ENCODE measurements at regions of chr14 and their contacts with region 1.

Region 1: GRCh38 chr14:45134051-45134958 is at the start of gene FKBP3:
- DNase-seq: peak; percentile 94 to 98
- ATAC-seq: peak; percentile 98 to 99 (median 99)
- H3K4me3 ChIP-seq: peak within 1 kb of the TSS; percentile 56 to 85 (median 71)
- H3K27ac ChIP-seq: peak within 1 kb of the TSS; percentile 69 to 94 (median 92)
- H3K4me1 ChIP-seq: peaks cover 0 to 66% (median 43%) of the 10 kb centered on the region in 9 donors
- H3K27me3 ChIP-seq: no peaks in the 10 kb centered on the region
- CTCF ChIP-seq: peak in 4 of 9 donors; percentile 13 to 41 (median 40)
- total RNA-seq, gene FKBP3: 83.9 to 128 (median 105) TPM

Region 2: DNA sequence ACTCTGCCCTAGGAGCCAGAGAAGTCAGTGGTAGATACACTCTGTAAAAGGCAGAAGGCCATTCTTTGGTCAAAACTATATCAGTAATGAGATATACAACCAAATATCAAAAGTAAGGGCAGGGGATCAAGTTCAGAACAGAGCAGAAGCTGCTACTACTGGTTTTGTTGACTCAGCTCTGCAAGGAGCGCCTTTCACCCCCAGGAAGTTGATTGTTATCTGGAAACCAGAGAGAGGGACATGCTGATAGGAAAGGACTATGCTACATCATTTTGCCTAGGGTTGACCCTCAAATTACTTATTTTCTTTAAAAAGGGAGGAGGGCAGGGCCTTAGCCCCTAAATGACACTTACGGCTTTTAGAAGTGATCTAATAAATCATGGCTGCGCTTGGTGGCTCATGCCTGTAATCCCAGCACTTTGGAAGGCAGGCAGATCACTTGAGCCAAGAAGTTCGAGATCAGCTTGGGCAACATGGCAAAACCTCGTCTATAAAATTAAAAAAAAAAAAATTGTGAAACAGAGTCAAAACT is 366.6 kb before region 1 on chr14:
- intact Hi-C with region 1: no loop called
- DNase-seq: no peak
- ATAC-seq: no peak
- H3K4me3 ChIP-seq: no peak overlapping the region
- H3K27ac ChIP-seq: no peak overlapping the region
- H3K4me1 ChIP-seq: no peaks in the 10 kb centered on the region
- H3K27me3 ChIP-seq: no peaks in the 10 kb centered on the region
- CTCF ChIP-seq: no peak

Region 3: GRCh38 chr14:44897045-44897844 is 237.1 kb before region 1 on chr14:
- intact Hi-C with region 1: loop called in 4 of 10 experiments (anchors 1 to 10 kb)
- DNase-seq: peak; percentile 98
- ATAC-seq: peak; percentile 98 to 100 (median 99)
- H3K4me3 ChIP-seq: peak overlapping the region; percentile 67 to 96 (median 90)
- H3K27ac ChIP-seq: peak overlapping the region; percentile 96 to 100 (median 99)
- H3K4me1 ChIP-seq: peaks cover 0 to 30% (median 21%) of the 10 kb centered on the region in 9 donors
- H3K27me3 ChIP-seq: no peaks in the 10 kb centered on the region
- CTCF ChIP-seq: peak in 1 of 9 donors; percentile 21

Region 4: DNA sequence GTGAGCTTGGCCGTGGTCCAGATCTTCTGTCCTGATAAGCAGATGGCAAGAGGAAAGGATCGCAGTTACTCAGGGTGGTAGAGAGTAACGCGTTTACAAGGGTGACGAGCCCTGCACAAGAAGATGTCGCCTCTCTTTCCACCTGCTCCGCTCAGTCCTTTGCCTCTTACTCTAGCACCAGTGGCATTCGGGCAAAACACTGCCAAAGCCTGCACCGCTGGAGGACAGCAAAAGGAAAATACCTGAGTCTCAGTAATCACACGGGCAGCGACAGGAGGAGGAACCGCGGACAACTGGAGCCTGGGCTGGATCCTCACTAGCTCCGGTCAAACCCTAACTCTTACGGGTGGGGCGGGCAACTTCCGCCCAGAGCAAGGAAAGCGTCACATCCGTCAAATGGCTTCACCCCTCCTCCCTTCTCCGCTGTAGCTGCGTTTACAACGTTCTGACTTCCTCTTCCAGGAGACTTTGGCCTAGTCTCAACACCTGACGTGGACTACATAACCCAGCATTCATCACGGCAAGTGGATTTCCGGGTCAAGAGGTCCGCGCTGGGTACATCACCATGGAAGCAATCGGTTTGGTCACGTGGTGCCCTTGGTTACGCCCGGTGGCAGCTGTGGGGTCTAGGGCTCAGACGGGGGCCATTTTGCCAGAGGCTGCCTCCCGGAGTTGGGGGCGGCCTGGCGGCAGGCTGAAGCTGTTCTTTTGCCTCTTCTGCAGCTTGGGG is 172.5 kb before region 1 on chr14 and contains the starts of genes KLHL28 and TOGARAM1:
- intact Hi-C with region 1: loop called in 7 of 10 experiments (anchors 1 to 5 kb)
- DNase-seq: peak; percentile 89 to 99
- ATAC-seq: peak; percentile 96 to 98 (median 96)
- H3K4me3 ChIP-seq: peak within 1 kb of the TSS; percentile 50 to 98 (median 84)
- H3K27ac ChIP-seq: peak within 1 kb of the TSS; percentile 79 to 96 (median 88)
- H3K4me1 ChIP-seq: peaks cover 0 to 78% (median 66%) of the 10 kb centered on the region in 9 donors
- H3K27me3 ChIP-seq: no peaks in the 10 kb centered on the region
- CTCF ChIP-seq: no peak
- total RNA-seq, gene KLHL28: 9.0 to 15.4 (median 13.0) TPM
- total RNA-seq, gene TOGARAM1: 14.7 to 25.2 (median 22.2) TPM

Region 5: DNA sequence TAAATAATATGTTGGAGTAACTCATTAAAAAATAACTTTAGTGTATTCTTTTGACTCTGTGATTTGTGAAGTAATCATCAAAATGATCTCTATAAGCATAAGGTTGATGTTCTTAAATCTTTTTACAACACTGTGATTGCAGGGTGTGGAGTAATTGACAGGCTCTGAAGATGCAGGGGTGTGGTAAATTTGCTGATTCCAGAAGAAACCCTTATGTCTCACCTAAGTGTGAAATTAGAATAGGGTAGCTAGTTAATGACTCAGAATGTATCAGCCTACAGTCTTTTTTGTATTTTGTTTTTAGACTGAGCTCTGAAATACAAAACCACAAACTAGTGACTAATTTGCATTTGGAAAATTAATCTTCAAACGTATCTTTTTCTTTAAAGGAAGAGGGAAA is 44.5 kb before region 1 on chr14:
- intact Hi-C with region 1: loop called in 5 of 10 experiments (anchors 2 to 10 kb)
- DNase-seq: no peak
- ATAC-seq: no peak
- H3K4me3 ChIP-seq: no peak overlapping the region
- H3K27ac ChIP-seq: no peak overlapping the region
- H3K4me1 ChIP-seq: peaks cover 0 to 71% (median 56%) of the 10 kb centered on the region in 9 donors
- H3K27me3 ChIP-seq: no peaks in the 10 kb centered on the region
- CTCF ChIP-seq: no peak

Region 6: GRCh38 chr14:45253068-45253753 is 118.9 kb after region 1 on chr14 and contains the start of gene MIS18BP1:
- intact Hi-C with region 1: loop called in 8 of 10 experiments (anchors 1 to 10 kb)
- DNase-seq: peak; percentile 94 to 97
- ATAC-seq: peak; percentile 95 to 99 (median 97)
- H3K4me3 ChIP-seq: peak within 1 kb of the TSS; percentile 54 to 90 (median 76)
- H3K27ac ChIP-seq: peak within 1 kb of the TSS; percentile 89 to 97 (median 92)
- H3K4me1 ChIP-seq: peaks cover 0 to 47% (median 36%) of the 10 kb centered on the region in 9 donors
- H3K27me3 ChIP-seq: no peaks in the 10 kb centered on the region
- CTCF ChIP-seq: peak; percentile 62 to 98 (median 85)
- total RNA-seq, gene MIS18BP1: 4.7 to 11.2 (median 8.1) TPM

Measured in heart right ventricle (tissue), 16 donors.